ENCODE measurements at regions of chr1 and their contacts with region 1.

Region 1: DNA sequence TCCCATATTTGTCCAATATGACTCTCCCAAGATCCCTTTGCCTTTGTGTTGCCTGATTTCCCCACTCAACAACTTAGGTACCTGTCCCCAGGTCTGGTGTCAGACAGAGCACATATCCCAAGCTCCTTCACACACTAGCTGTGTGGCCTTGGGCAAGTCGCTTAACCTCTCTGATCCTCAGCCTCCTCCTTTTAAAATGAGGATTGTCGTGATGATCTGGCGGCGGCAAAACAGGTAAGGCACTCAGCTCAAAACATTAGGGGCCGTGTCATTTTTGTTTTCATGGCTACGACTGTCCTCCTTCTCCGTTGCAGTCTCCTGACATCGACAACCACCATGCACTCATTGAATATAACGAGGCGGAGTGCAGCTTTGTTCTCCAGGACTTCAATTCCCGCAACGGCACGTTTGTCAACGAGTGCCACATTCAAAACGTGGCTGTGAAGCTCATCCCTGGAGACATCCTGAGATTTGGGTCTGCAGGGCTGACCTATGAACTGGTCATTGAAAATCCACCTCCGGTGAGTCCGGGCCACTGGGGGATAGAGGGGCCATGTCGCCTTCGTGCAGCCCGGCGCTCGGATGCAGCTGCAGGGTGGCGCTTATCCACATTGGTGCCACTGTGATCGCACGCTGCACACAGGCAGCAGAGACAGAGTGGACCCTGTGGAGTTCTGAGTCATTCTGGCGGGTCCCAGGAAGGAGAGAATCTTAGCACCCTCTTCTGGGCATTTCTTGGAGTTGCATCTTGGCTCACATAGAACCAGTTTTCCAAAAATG is 25.2 kb downstream of the FHAD1 start:
- DNase-seq: peak; percentile 76
- H3K4me3 ChIP-seq: no peak overlapping the region
- H3K27ac ChIP-seq: no peak overlapping the region
- H3K4me1 ChIP-seq: peaks cover 4% of the 10 kb centered on the region
- H3K27me3 ChIP-seq: no peaks in the 10 kb centered on the region
- CTCF ChIP-seq: peak; percentile 73 to 81 (median 77)
- POLR2A ChIP-seq: no peak

Region 2: GRCh38 chr1:15128520-15129313 is 143.5 kb before region 1 on chr1:
- intact Hi-C with region 1: loop called (anchors 10 kb)
- DNase-seq: peak; percentile 84
- H3K4me3 ChIP-seq: no peak overlapping the region
- H3K27ac ChIP-seq: no peak overlapping the region
- H3K4me1 ChIP-seq: no peaks in the 10 kb centered on the region
- H3K27me3 ChIP-seq: no peaks in the 10 kb centered on the region
- CTCF ChIP-seq: peak; percentile 82 to 87 (median 87)
- POLR2A ChIP-seq: no peak

Region 3: GRCh38 chr1:15152318-15153183 is 119.6 kb before region 1 on chr1:
- intact Hi-C with region 1: loop called (anchors 10 kb)
- DNase-seq: peak; percentile 93
- H3K4me3 ChIP-seq: peak overlapping the region; percentile 64 to 74
- H3K27ac ChIP-seq: peak overlapping the region; percentile 74 to 75
- H3K4me1 ChIP-seq: peaks cover 14% of the 10 kb centered on the region
- H3K27me3 ChIP-seq: no peaks in the 10 kb centered on the region
- CTCF ChIP-seq: peak; percentile 52 to 77 (median 52)
- POLR2A ChIP-seq: no peak

Region 4: GRCh38 chr1:15674386-15675159 is 402.4 kb after region 1 on chr1:
- intact Hi-C with region 1: no loop called
- DNase-seq: no peak
- H3K4me3 ChIP-seq: no peak overlapping the region
- H3K27ac ChIP-seq: no peak overlapping the region
- H3K4me1 ChIP-seq: no peaks in the 10 kb centered on the region
- H3K27me3 ChIP-seq: no peaks in the 10 kb centered on the region
- CTCF ChIP-seq: no peak
- POLR2A ChIP-seq: no peak